Activated T-helper 1 cell treated with anti-CD3 and anti-CD28 coated beads, Interleukin-12 subunit alpha, Interleukin-12 subunit beta, Interleukin-2, Interleukin-4 antibody, amounts not matched to agents 30 ng/mL and 10 ng/mL and 1 ng/mL, durations not matched to agents 14 hours and 24 hours and 36 hours (primary cell): ENCODE measurements at regions of chr22 and their contacts with region 1.

Region 1: DNA sequence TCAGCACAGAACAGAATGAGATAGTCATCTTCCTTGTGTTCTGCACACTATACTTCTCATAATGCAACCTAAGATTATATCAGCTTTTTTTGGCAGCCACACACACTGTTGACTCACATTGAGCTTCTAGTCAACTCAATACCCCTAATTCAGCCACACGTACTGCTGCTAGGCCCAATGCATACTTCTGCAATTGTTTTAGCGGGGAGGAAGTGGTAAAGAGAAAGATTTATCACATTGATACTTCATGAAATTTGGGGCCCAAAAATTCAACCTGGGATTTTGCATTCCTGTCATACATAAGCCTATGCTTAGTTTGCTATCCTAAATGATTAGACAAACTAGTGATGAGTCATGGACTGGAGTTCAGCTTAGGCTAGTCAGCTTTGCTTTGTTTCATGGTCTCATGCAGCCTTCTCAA is 8.6 kb upstream of the UPB1 start:
- DNase-seq: peak; percentile 17
- H3K4me3 Mint-ChIP-seq: no peak overlapping the region
- H3K27ac Mint-ChIP-seq: peak overlapping the region; percentile 63
- H3K4me1 Mint-ChIP-seq: peaks cover 21% of the 10 kb centered on the region
- H3K27me3 Mint-ChIP-seq: peaks cover 9% of the 10 kb centered on the region

Region 2: GRCh38 chr22:24510637-24511625 is 24.4 kb after region 1 on chr22:
- intact Hi-C with region 1: loop called (anchors 1 kb)
- DNase-seq: no peak
- H3K4me3 Mint-ChIP-seq: peak overlapping the region; percentile 1
- H3K27ac Mint-ChIP-seq: peak overlapping the region; percentile 32
- H3K4me1 Mint-ChIP-seq: peaks cover 41% of the 10 kb centered on the region
- H3K27me3 Mint-ChIP-seq: peaks cover 3% of the 10 kb centered on the region

Region 3: DNA sequence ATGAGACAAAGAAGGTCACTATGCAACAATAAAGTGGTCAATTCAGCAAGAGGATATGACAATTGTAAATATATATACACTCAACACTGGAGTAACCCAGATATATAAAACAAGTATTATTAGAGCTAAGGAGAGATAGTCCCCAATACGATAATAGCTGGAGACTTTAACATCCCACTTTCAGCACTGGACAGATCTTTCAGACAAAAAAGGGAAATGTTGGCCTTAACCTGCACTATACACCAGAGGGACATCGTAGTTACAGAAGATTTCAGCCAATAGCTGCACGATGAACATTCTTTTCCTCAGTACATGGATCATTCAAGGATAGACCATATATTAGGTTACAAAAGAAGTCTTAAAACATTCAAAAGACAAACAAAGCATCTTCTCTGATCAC is 258.1 kb after region 1 on chr22:
- intact Hi-C with region 1: no loop called
- DNase-seq: no peak
- H3K4me3 Mint-ChIP-seq: no peak overlapping the region
- H3K27ac Mint-ChIP-seq: no peak overlapping the region
- H3K4me1 Mint-ChIP-seq: no peaks in the 10 kb centered on the region
- H3K27me3 Mint-ChIP-seq: peaks cover 28% of the 10 kb centered on the region

Region 4: DNA sequence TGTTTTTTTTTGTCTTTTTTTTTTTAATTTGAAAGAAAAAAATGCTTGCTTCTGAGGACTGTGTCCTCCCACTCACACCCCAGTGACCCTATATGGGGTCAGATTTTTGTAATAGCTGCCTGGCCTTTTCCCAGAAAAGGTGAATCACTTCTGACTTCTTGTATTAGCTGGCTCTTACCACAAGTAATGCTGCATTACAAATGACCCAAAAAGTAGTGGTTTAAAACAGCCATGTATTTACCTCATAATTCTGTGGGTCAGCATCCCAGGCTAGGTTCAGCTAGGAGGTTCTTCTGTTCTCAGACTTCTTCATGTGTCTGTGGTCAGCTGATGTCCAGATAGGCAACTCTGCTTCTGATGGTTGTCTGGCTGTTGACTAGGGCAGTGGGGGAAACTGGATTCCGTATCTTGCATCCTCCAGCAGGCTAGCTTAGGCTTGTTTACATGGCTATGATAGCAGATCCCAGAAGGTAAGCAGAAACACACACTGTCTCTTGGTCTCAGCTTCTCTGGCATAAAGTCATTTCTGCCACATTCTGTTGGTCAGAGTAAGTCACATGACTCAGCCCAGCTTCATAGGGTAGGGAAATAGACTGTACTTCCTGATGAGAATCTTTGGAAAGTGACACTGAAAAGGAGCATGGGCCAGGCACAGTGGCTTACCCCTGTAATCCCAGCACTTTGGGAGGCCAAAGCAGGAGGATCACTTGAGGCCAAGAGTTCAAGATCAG is 440.5 kb after region 1 on chr22:
- intact Hi-C with region 1: no loop called
- DNase-seq: no peak
- H3K4me3 Mint-ChIP-seq: no peak overlapping the region
- H3K27ac Mint-ChIP-seq: no peak overlapping the region
- H3K4me1 Mint-ChIP-seq: no peaks in the 10 kb centered on the region
- H3K27me3 Mint-ChIP-seq: peaks cover 28% of the 10 kb centered on the region